Right ventricle myocardium superior (tissue), 1 donor: ENCODE measurements at regions of chr5 and their contacts with region 1.

Region 1: GRCh38 chr5:181223058-181223728 is at the start of gene TRIM41:
- DNase-seq: peak; percentile 100
- ATAC-seq: peak; percentile 89
- total RNA-seq, gene TRIM41: 20.7 TPM

Region 2: DNA sequence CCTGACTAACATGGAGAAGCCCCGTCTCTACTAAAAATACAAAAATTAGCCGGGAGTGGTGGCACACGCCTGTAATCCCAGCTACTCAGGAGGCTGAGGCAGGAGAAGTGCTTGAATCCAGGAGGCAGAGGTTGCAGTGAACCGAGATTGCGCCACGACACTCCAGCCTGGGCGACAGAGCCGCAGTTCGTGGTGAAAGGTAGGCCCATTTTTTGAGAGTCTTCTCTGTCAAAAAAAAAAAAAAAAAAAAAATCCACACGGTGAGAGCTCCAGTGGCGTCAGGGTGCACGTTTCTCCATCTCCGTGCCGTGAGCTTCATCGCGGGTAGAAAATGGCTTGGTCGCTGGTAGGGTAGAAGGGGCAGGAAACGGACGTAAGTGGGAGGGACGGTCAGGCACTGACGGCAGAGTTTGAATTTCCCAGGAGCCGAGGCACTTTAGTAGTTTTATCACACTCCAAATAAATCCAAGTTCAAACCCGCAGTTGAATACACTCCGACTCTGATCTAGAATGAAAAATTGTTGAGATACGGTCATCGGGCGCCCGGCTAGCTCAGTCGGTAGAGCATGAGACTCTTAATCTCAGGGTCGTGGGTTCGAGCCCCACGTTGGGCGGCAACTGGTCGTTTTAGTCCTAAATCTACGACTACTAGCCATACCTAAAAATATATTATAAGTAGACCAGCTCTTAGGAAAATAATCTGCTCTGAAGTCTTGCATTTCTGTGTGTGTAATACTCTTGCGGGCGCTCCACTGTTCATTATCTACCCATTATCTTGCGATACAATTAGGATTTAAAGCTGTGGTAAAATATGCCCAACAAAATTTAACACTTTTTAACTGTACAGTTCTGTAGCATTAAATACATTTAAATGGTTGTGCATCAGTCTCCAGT is 15.7 kb before region 1 on chr5:
- intact Hi-C with region 1: loop called (anchors 2 kb)
- DNase-seq: peak; percentile 87
- ATAC-seq: peak; percentile 48

Region 3: GRCh38 chr5:181243512-181244343 is 20.5 kb after region 1 on chr5 and contains the start of gene RACK1:
- intact Hi-C with region 1: loop called (anchors 2 kb)
- DNase-seq: peak; percentile 93
- ATAC-seq: peak; percentile 74
- total RNA-seq, gene RACK1: 577 TPM

Region 4: GRCh38 chr5:181255836-181256578 is 32.8 kb after region 1 on chr5:
- intact Hi-C with region 1: no loop called
- DNase-seq: no peak
- ATAC-seq: no peak